Calu3 (cell line): ENCODE measurements at regions of chr4 and their contacts with region 1.

Region 1: GRCh38 chr4:176789955-176790354 is 2.8 kb downstream of the VEGFC start:
- DNase-seq: no peak
- H3K4me3 Mint-ChIP-seq: no peak overlapping the region
- H3K27ac Mint-ChIP-seq: no peak overlapping the region
- H3K4me1 Mint-ChIP-seq: peaks cover 19% of the 10 kb centered on the region
- H3K27me3 Mint-ChIP-seq: no peaks in the 10 kb centered on the region
- CTCF ChIP-seq: peak; percentile 47

Region 2: GRCh38 chr4:176538217-176538925 is 251.6 kb before region 1 on chr4:
- CTCF ChIA-PET with region 1: no interaction called
- intact Hi-C with region 1: no loop called
- DNase-seq: no peak
- H3K4me3 Mint-ChIP-seq: no peak overlapping the region
- H3K27ac Mint-ChIP-seq: no peak overlapping the region
- H3K4me1 Mint-ChIP-seq: peaks cover 13% of the 10 kb centered on the region
- H3K27me3 Mint-ChIP-seq: no peaks in the 10 kb centered on the region
- CTCF ChIP-seq: no peak

Region 3: DNA sequence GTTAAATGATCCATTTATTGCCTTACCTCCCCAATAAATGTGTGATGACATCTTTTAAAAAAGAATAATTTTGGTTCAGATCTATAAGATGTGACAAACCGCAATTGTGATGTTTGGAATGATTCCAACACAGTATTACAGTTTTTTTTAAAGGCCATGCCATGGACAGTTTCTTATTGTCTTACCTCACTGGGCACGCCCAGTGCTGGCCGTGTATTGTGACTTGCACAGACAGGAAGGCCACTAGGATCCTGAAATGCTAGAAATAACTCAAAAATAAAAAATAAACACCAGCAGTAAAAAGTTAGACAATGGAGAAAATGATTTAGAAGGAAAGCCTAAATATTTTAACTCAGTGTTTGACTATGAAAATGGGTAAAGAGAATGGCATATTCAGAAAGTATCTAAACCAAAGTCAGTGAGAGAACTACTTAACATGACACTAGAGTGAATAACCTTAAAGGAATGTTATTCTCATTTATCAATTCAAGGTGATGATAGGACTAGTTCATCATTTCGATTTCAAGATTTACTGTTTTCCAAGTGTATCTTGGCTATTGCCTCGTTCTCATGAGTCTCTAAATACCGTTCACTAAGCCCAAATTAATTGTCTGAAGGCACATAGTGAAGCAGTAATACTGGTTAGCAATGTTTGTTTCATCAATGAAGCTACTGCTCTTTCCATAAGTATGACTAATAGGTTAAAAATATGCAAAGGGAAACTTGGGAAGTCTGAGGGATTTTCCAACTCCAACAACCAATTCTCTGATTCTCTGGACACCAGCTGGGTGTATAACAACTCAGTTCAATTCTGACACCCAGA is 48.9 kb after region 1 on chr4:
- CTCF ChIA-PET with region 1: no interaction called
- intact Hi-C with region 1: no loop called
- DNase-seq: no peak
- H3K4me3 Mint-ChIP-seq: no peak overlapping the region
- H3K27ac Mint-ChIP-seq: no peak overlapping the region
- H3K4me1 Mint-ChIP-seq: peaks cover 16% of the 10 kb centered on the region
- H3K27me3 Mint-ChIP-seq: no peaks in the 10 kb centered on the region
- CTCF ChIP-seq: no peak

Region 4: DNA sequence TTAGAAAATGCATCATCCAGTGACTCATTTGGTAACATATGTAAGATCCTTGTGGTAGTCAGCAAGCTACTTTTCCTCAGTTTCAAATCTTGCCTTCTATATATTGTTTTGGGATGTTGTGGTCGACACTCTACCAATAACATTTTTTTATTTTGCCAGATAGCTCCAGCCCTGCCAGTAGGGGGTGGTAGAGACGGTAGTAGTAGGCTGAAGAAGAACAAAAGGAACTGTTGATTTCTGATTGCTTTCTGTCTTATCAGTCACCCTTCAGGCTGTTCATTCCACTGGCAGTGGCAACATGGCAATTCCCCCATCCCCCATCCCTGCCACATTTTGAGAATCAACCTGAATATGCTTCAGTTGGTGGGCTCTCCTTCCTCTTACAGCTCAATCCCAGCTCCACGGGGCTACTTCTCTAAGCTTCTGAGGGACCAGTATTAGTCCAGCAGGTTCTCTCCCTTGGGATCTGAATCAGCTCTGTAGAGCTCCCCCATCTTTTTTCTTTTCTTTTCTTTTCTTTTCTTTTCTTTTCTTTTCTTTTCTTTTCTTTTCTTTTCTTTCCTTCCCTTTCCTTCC is 174.2 kb after region 1 on chr4:
- CTCF ChIA-PET with region 1: no interaction called
- intact Hi-C with region 1: loop called (anchors 5 kb)
- DNase-seq: peak; percentile 52
- H3K4me3 Mint-ChIP-seq: no peak overlapping the region
- H3K27ac Mint-ChIP-seq: no peak overlapping the region
- H3K4me1 Mint-ChIP-seq: no peaks in the 10 kb centered on the region
- H3K27me3 Mint-ChIP-seq: no peaks in the 10 kb centered on the region
- CTCF ChIP-seq: peak; percentile 29

Region 5: DNA sequence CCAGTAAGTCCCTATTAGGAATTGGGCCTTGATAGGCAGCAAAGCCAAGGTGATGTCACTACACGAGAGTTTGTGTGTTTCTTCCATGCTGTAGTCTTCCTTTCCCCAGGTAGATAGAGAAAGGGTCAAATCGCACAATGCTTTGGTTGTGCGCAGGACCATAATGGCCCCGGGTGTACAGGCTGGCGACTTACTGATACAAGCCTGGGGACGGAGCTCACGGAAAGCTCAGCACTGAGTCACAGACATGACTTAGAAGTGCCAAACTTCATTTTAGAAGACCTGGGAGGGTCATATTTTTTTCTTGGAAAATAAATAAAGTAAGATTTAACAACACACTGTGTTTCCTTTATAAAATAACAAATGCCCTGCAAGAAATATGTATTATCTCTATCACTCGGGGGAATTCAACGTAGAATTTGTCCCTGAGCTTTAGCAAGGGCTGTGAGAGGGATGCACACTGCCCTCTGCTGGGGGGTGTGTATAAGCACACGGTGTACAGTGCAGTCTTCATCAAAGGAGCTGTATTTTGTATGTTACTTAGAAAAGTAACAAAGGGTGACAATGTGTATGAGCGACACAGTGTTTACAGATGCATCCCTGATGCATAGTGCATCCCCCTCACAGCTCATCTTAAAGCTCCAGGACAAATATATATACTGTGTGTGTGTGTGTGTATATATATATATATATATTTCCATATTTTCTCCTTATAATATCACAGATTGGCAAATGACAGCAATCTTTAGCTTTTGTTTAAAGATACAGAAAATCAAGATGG is 257.3 kb after region 1 on chr4:
- CTCF ChIA-PET with region 1: interaction called, 8 read pairs
- intact Hi-C with region 1: loop called (anchors 1 kb)
- DNase-seq: peak; percentile 73
- H3K4me3 Mint-ChIP-seq: no peak overlapping the region
- H3K27ac Mint-ChIP-seq: no peak overlapping the region
- H3K4me1 Mint-ChIP-seq: no peaks in the 10 kb centered on the region
- H3K27me3 Mint-ChIP-seq: no peaks in the 10 kb centered on the region
- CTCF ChIP-seq: peak; percentile 59

Region 6: GRCh38 chr4:177309522-177310371 is 519.8 kb after region 1 on chr4 and contains the start of gene NEIL3:
- CTCF ChIA-PET with region 1: no interaction called
- intact Hi-C with region 1: loop called (anchors 10 kb)
- DNase-seq: peak; percentile 81
- H3K4me3 Mint-ChIP-seq: peak within 1 kb of the TSS; percentile 99
- H3K27ac Mint-ChIP-seq: peak within 1 kb of the TSS; percentile 46
- H3K4me1 Mint-ChIP-seq: peaks cover 8% of the 10 kb centered on the region
- H3K27me3 Mint-ChIP-seq: no peaks in the 10 kb centered on the region
- CTCF ChIP-seq: no peak
- total RNA-seq, gene NEIL3: 8.7 and 10.6 TPM in 2 replicates